Endothelial cell of umbilical vein (primary cell): ENCODE measurements at regions of chr13 and their contacts with region 1.

Region 1: DNA sequence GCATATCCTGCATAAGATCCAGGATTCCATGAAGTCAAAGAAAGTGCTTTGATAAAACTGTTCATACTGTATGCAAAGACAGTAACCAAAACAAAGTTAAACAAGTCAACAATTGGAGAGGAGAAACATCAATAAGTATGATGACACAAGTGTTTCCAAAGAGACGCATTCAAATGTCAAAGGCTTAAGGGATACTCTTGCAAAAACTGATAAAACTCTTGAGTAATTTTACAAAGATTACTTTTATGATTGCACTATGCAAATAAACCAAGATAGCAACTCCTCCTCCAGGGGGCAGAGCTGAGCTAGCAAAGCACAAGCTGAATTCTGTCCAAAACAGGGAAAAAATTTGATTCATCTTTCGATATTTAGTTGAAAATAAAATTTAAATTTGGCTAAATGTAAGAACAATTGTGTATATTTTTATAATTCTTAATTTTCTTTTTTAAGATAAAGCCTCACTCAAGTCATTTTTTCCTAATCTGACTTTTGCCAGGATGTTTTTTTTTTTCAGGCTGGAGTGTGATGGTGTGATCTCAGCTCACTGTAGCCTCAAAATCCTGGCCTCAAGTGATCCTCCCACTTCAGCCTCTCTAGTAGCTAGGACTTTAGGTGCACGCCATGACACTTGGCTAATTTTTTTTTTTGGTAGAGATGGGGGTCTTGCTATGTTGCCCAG is 84.0 kb downstream of the MZT1 start:
- DNase-seq: peak; percentile 58
- H3K4me3 ChIP-seq: no peak overlapping the region
- H3K27ac ChIP-seq: no peak overlapping the region
- H3K4me1 ChIP-seq: no peaks in the 10 kb centered on the region
- H3K27me3 ChIP-seq: peaks cover 16 to 40% of the 10 kb centered on the region in 2 experiments
- CTCF ChIP-seq: peak; percentile 61 to 69
- POLR2A ChIP-seq: no peak

Region 2: GRCh38 chr13:72303941-72304746 is 339.3 kb before region 1 on chr13:
- CTCF ChIA-PET with region 1: no interaction called
- POLR2A ChIA-PET with region 1: no interaction called
- dilution Hi-C with region 1: no loop called
- intact Hi-C with region 1: no loop called
- DNase-seq: peak; percentile 30
- H3K4me3 ChIP-seq: no peak overlapping the region
- H3K27ac ChIP-seq: no peak overlapping the region
- H3K4me1 ChIP-seq: no peaks in the 10 kb centered on the region
- H3K27me3 ChIP-seq: no peaks in the 10 kb centered on the region
- CTCF ChIP-seq: no peak
- POLR2A ChIP-seq: no peak

Region 3: DNA sequence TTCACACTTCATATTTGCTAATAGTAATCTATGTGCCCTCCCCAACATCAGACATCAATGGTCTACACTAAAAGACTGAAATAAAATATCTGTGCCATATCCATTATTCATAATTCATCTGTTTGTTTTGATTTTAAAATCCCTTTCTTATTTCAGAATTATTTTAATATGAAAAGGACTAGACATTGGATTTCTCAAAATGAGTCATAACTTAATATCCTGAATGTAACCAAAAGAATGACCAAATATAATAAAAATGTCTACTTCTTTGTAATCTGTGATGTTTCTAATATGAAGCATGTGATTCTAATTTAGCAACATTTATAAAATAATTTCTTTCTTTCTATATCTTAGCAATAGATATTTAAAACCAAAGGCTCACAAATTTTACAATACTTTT is 19.1 kb after region 1 on chr13:
- CTCF ChIA-PET with region 1: interaction called, 10 read pairs
- POLR2A ChIA-PET with region 1: no interaction called
- dilution Hi-C with region 1: no loop called
- intact Hi-C with region 1: no loop called
- DNase-seq: no peak
- H3K4me3 ChIP-seq: no peak overlapping the region
- H3K27ac ChIP-seq: no peak overlapping the region
- H3K4me1 ChIP-seq: no peaks in the 10 kb centered on the region
- H3K27me3 ChIP-seq: peaks cover 5 to 28% of the 10 kb centered on the region in 2 experiments
- CTCF ChIP-seq: no peak
- POLR2A ChIP-seq: no peak

Region 4: GRCh38 chr13:72686766-72687165 is 43.3 kb after region 1 on chr13:
- CTCF ChIA-PET with region 1: interaction called, 11 read pairs
- POLR2A ChIA-PET with region 1: no interaction called
- dilution Hi-C with region 1: no loop called
- intact Hi-C with region 1: no loop called
- DNase-seq: no peak
- H3K4me3 ChIP-seq: no peak overlapping the region
- H3K27ac ChIP-seq: no peak overlapping the region
- H3K4me1 ChIP-seq: peaks cover 3% of the 10 kb centered on the region
- H3K27me3 ChIP-seq: peaks cover 14 to 17% of the 10 kb centered on the region in 2 experiments
- CTCF ChIP-seq: no peak
- POLR2A ChIP-seq: no peak

Region 5: GRCh38 chr13:72696579-72696978 is 53.1 kb after region 1 on chr13:
- CTCF ChIA-PET with region 1: interaction called, 129 read pairs
- POLR2A ChIA-PET with region 1: no interaction called
- dilution Hi-C with region 1: no loop called
- intact Hi-C with region 1: loop called (anchors 1 kb)
- DNase-seq: peak; percentile 45
- H3K4me3 ChIP-seq: no peak overlapping the region
- H3K27ac ChIP-seq: no peak overlapping the region
- H3K4me1 ChIP-seq: no peaks in the 10 kb centered on the region
- H3K27me3 ChIP-seq: peaks cover 16 to 21% of the 10 kb centered on the region in 2 experiments
- CTCF ChIP-seq: peak in 1 of 2 donors; percentile 2
- POLR2A ChIP-seq: no peak